ENCODE measurements at regions of chr11 and their contacts with region 1.

Region 1: DNA sequence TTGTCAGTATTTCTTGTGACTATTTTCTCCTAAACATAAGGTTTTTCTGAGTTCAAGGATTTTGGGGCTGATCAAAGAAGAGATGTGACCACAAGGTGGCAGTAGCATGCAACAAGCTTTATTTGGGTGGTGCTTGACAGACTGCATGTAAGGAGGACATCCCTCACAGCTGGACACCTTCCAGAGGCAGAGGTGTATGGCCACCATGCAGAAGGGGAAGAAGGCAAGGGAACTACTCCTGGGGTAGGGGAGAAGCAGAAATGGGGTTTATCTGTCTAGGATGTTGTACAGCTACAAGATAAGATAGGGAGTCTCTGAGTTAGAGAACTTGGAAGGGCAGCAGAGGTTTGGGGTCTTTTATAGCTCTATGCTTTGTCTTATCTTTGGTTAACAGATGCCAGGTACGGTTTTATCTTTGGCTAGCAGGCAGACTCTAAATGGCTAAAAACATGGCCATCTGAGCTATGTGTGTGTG is 5.1 kb upstream of the BIRC2 start:
- DNase-seq: peak; percentile 95 to 98 (median 96)
- H3K4me3 ChIP-seq: no peak overlapping the region
- H3K27ac ChIP-seq: peak overlapping the region in 1 of 2 experiments; percentile 45
- H3K4me1 ChIP-seq: peaks cover 8 to 18% (median 15%) of the 10 kb centered on the region in 4 experiments
- H3K27me3 ChIP-seq: no peaks in the 10 kb centered on the region

Region 2: GRCh38 chr11:102197670-102198139 is 144.2 kb before region 1 on chr11:
- CTCF ChIA-PET with region 1: no interaction called
- POLR2A ChIA-PET with region 1: no interaction called
- DNase-seq: no peak
- H3K4me3 ChIP-seq: no peak overlapping the region
- H3K27ac ChIP-seq: no peak overlapping the region
- H3K4me1 ChIP-seq: no peaks in the 10 kb centered on the region
- H3K27me3 ChIP-seq: peaks cover 3 to 31% (median 4%) of the 10 kb centered on the region in 5 experiments

Region 3: DNA sequence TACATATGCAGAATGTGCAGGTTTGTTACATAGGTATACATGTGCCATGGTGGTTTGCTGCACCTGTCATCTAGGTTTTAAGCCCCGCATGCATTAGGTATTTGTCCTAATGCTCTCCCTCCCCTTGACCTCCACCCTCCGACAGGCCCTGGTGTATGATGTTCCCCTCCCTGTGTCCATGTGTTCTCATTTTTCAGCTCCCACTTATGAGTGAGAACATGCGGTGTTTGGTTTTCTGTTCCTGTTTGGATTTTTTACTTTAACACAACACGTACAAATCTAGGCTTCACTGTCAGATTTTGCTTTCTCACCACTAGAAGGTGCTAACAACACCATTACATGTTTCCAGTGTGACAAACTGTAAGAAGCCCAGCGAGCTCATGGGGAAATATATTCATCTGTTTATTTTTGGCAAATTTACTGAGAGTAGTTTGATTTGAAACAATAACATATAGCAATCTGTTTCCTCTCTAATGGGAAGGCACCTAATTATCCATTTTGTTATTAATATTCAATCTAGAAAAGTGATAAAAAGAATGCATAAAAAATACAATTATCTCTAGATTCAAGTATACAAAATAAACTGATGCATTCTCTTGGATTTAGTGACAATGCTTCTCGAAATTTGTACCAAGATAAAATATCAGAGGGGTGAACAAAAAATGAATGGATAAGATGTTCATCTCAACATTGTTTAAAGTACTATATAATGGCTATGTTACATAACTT is 47.8 kb before region 1 on chr11:
- CTCF ChIA-PET with region 1: interaction called, 23 read pairs
- POLR2A ChIA-PET with region 1: interaction called, 9 read pairs
- DNase-seq: peak; percentile 67 to 84 (median 83)
- H3K4me3 ChIP-seq: peak overlapping the region in 1 of 7 experiments; percentile 42
- H3K27ac ChIP-seq: no peak overlapping the region
- H3K4me1 ChIP-seq: peaks cover 0 to 12% (median 5%) of the 10 kb centered on the region in 4 experiments
- H3K27me3 ChIP-seq: no peaks in the 10 kb centered on the region

Region 4: GRCh38 chr11:102323542-102324251 is 18.2 kb before region 1 on chr11:
- CTCF ChIA-PET with region 1: interaction called, 15 read pairs
- POLR2A ChIA-PET with region 1: interaction called, 7 read pairs
- DNase-seq: no peak
- H3K4me3 ChIP-seq: no peak overlapping the region
- H3K27ac ChIP-seq: no peak overlapping the region
- H3K4me1 ChIP-seq: peaks cover 11 to 47% (median 20%) of the 10 kb centered on the region in 4 experiments
- H3K27me3 ChIP-seq: no peaks in the 10 kb centered on the region

Region 5: GRCh38 chr11:102495161-102496042 is 153.5 kb after region 1 on chr11:
- CTCF ChIA-PET with region 1: interaction called, 15 read pairs
- POLR2A ChIA-PET with region 1: no interaction called
- DNase-seq: peak; percentile 82 to 90 (median 86)
- H3K4me3 ChIP-seq: no peak overlapping the region
- H3K27ac ChIP-seq: no peak overlapping the region
- H3K4me1 ChIP-seq: no peaks in the 10 kb centered on the region
- H3K27me3 ChIP-seq: no peaks in the 10 kb centered on the region

Measured in common myeloid progenitor, CD34-positive (primary cell).